Sigmoid colon (tissue), 7 donors: ENCODE measurements at regions of chr5 and their contacts with region 1.

Region 1: GRCh38 chr5:149667084-149667828 is 62.9 kb upstream of the PPARGC1B start:
- DNase-seq: no peak
- H3K4me3 ChIP-seq: no peak overlapping the region
- H3K27ac ChIP-seq: peak overlapping the region in 2 of 4 donors; percentile 4 to 23
- H3K4me1 ChIP-seq: peaks cover 0 to 4% (median 4%) of the 10 kb centered on the region in 4 donors
- H3K27me3 ChIP-seq: no peaks in the 10 kb centered on the region
- CTCF ChIP-seq: peak; percentile 79 to 88 (median 82)
- EP300 ChIP-seq: no peak
- POLR2A ChIP-seq: no peak

Region 2: GRCh38 chr5:149724130-149724840 is 57.0 kb after region 1 on chr5:
- intact Hi-C with region 1: loop called (anchors 2 kb)
- DNase-seq: no peak
- H3K4me3 ChIP-seq: no peak overlapping the region
- H3K27ac ChIP-seq: no peak overlapping the region
- H3K4me1 ChIP-seq: peaks cover 0 to 18% (median 14%) of the 10 kb centered on the region in 4 donors
- H3K27me3 ChIP-seq: no peaks in the 10 kb centered on the region
- CTCF ChIP-seq: no peak
- EP300 ChIP-seq: no peak
- POLR2A ChIP-seq: no peak